ENCODE measurements at regions of chr3 and their contacts with region 1.

Region 1: GRCh38 chr3:141231101-141231935 is at the start of gene PXYLP1:
- DNase-seq: peak; percentile 93
- H3K4me3 Mint-ChIP-seq: peak within 1 kb of the TSS; percentile 79
- H3K27ac Mint-ChIP-seq: peak within 1 kb of the TSS; percentile 86
- H3K4me1 Mint-ChIP-seq: peaks cover 53% of the 10 kb centered on the region
- H3K27me3 Mint-ChIP-seq: peaks cover 9% of the 10 kb centered on the region
- total RNA-seq, gene PXYLP1: 16.1 to 16.5 TPM

Region 2: GRCh38 chr3:141105828-141106628 is 125.3 kb before region 1 on chr3:
- CTCF ChIA-PET with region 1: no interaction called
- POLR2A ChIA-PET with region 1: no interaction called
- DNase-seq: peak; percentile 61
- H3K4me3 Mint-ChIP-seq: no peak overlapping the region
- H3K27ac Mint-ChIP-seq: no peak overlapping the region
- H3K4me1 Mint-ChIP-seq: no peaks in the 10 kb centered on the region
- H3K27me3 Mint-ChIP-seq: no peaks in the 10 kb centered on the region

Region 3: GRCh38 chr3:141129541-141130011 is 101.7 kb before region 1 on chr3:
- CTCF ChIA-PET with region 1: no interaction called
- POLR2A ChIA-PET with region 1: no interaction called
- DNase-seq: no peak
- H3K4me3 Mint-ChIP-seq: no peak overlapping the region
- H3K27ac Mint-ChIP-seq: no peak overlapping the region
- H3K4me1 Mint-ChIP-seq: no peaks in the 10 kb centered on the region
- H3K27me3 Mint-ChIP-seq: peaks cover 12% of the 10 kb centered on the region

Region 4: GRCh38 chr3:141192345-141192744 is 39.0 kb before region 1 on chr3:
- CTCF ChIA-PET with region 1: interaction called, 10 read pairs
- POLR2A ChIA-PET with region 1: no interaction called
- DNase-seq: peak; percentile 95
- H3K4me3 Mint-ChIP-seq: no peak overlapping the region
- H3K27ac Mint-ChIP-seq: no peak overlapping the region
- H3K4me1 Mint-ChIP-seq: peaks cover 15% of the 10 kb centered on the region
- H3K27me3 Mint-ChIP-seq: peaks cover 27% of the 10 kb centered on the region

Region 5: DNA sequence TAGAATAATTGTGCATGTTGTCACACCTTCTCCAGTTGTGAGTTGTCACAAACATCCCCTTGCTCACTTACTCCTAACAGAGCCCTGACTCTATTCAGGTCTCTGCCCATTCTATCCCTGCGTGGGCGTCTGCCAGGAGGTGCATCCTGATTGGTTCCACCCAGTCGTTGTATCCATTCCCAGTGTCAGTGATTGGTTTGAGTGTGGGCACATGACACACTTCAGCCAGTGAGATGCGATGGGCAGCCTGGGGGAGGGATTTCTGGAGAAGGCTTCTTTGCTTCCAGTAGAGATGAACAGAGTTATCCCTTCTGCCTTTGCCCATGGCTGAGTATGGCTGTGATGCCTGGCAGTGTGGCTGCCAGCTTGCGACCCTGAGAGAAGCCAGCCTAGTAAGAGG is 19.0 kb after region 1 on chr3:
- CTCF ChIA-PET with region 1: interaction called, 52 read pairs
- POLR2A ChIA-PET with region 1: interaction called, 23 read pairs
- DNase-seq: no peak
- H3K4me3 Mint-ChIP-seq: no peak overlapping the region
- H3K27ac Mint-ChIP-seq: no peak overlapping the region
- H3K4me1 Mint-ChIP-seq: peaks cover 3% of the 10 kb centered on the region
- H3K27me3 Mint-ChIP-seq: no peaks in the 10 kb centered on the region

Region 6: DNA sequence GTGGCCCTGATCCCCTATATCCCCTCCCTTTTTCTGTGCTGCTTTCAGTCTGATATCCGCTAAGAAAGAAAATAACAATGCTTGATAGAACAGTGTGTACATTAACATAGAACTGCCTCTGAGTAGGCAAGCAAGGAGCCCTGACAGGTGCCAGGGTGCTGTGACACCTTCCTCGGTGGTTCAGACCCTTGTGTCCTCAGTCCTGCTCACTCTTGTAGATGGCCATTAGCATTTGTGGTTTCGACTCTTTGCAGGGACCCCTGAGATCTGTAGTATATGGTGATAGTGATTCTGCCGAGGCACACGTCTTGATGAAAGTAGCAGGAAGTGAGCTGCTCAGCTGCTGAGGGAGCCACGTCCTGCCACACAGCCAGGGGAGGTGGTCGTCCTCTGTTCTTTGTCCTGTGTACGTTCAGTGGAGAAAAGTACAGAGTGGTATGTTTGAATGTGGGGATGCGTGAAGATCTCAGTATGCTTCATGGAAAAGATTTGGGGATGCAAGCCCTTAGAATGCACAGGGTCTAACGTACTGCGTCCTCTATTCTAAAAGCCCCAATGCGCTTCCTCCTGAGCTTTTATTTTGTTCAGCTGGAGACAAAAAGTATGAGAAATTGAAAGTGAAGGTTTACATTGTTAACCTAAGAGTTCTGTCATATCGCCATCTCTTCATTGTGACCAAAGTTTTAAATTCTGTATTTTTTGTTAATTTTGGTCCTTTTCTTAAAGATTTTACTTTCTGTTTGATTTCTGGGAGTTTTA is 35.7 kb after region 1 on chr3:
- CTCF ChIA-PET with region 1: interaction called, 45 read pairs
- POLR2A ChIA-PET with region 1: interaction called, 53 read pairs
- DNase-seq: peak; percentile 52
- H3K4me3 Mint-ChIP-seq: peak overlapping the region; percentile 76
- H3K27ac Mint-ChIP-seq: peak overlapping the region; percentile 92
- H3K4me1 Mint-ChIP-seq: peaks cover 43% of the 10 kb centered on the region
- H3K27me3 Mint-ChIP-seq: no peaks in the 10 kb centered on the region

Region 7: DNA sequence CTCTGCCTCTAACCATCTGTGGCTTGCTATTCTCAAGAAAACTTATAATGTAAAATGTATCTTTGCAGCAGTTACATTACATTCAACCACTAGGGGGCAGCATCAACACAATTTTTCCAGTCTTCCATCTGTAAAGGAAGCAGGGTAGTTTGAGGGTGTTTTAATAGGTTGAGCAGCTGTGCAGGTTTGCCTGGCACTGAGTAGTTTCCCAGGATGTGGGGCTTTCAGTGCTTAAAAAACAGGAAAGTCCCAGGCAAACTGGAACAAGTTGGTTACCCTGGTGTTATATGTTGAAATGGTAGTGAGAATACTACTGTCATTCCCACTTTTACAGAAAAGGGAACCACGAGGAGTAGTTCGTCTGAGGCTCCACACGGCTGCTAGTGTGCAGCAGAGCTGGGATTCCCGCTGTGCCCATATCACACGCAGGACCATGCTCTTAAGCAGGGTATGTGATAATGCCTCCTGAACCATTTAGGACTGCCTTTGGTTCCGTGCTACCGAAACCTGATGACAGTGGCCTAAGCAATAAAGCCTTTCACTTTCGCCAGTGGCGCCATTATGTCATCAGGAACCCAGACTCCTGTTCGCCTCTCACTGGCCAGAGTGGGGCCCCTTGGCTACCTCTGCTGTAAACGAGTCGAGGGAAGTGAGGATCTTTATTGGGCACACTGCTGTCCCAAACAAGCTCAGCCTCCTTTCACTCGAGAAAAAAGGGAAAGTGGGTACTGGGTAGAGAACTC is 72.3 kb after region 1 on chr3:
- CTCF ChIA-PET with region 1: interaction called, 37 read pairs
- POLR2A ChIA-PET with region 1: interaction called, 13 read pairs
- DNase-seq: peak; percentile 60
- H3K4me3 Mint-ChIP-seq: no peak overlapping the region
- H3K27ac Mint-ChIP-seq: no peak overlapping the region
- H3K4me1 Mint-ChIP-seq: peaks cover 37% of the 10 kb centered on the region
- H3K27me3 Mint-ChIP-seq: peaks cover 5% of the 10 kb centered on the region

Region 8: GRCh38 chr3:141452036-141452435 is 220.7 kb after region 1 on chr3:
- CTCF ChIA-PET with region 1: interaction called, 16 read pairs
- POLR2A ChIA-PET with region 1: interaction called, 7 read pairs
- DNase-seq: peak; percentile 57
- H3K4me3 Mint-ChIP-seq: no peak overlapping the region
- H3K27ac Mint-ChIP-seq: no peak overlapping the region
- H3K4me1 Mint-ChIP-seq: peaks cover 9% of the 10 kb centered on the region
- H3K27me3 Mint-ChIP-seq: no peaks in the 10 kb centered on the region

Measured in activated CD4-positive, alpha-beta memory T cell treated with anti-CD3 and anti-CD28 coated beads, Interleukin-2, amount 10 ng/mL, durations not matched to agents 7 days and 5 days (primary cell).